ENCODE measurements at regions of chr2 and their contacts with region 1.

Region 1: DNA sequence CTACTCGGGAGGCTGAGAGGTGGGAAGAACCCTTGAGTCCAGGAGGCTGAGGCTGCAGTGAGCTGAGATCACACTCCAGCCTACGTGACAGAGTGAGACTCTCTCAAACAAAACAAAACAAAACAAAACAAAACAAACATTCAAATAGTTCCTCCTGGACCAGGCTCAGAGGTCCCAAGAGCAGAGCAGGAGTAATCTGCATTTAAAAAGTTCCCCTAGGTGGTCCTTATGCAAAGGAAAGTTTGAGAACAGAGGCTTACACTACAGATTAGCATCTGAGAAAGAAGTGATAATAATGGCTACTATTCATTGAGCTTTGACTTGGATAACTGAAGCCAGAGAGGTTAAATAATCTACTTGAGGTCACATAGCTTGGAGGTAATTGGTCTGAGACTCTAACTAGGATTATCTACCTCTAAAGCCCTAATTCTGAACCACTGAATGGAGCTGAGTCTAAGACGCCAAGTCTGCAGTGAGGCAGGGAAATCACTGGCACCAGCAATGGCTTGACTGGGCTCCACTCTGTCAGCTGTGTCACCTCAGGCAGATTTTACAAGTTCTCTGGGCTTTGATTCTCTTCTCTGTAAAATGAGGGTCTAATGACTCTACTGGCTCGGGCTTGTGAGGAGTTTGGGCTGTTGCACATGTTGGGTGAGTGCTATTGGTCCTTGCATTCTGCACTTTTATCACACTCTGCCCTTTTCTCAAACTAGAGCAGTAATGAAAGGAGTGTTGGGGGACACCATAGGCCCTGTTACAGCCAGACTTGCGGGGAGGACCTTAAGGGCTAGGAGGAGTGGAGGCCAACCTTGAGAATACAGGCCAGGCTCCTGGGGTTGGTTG is 29.2 kb upstream of the DLX2 start:
- DNase-seq: no peak
- H3K4me3 Mint-ChIP-seq: no peak overlapping the region
- H3K27ac Mint-ChIP-seq: no peak overlapping the region
- H3K4me1 Mint-ChIP-seq: no peaks in the 10 kb centered on the region
- H3K27me3 Mint-ChIP-seq: peaks cover 32% of the 10 kb centered on the region

Region 2: DNA sequence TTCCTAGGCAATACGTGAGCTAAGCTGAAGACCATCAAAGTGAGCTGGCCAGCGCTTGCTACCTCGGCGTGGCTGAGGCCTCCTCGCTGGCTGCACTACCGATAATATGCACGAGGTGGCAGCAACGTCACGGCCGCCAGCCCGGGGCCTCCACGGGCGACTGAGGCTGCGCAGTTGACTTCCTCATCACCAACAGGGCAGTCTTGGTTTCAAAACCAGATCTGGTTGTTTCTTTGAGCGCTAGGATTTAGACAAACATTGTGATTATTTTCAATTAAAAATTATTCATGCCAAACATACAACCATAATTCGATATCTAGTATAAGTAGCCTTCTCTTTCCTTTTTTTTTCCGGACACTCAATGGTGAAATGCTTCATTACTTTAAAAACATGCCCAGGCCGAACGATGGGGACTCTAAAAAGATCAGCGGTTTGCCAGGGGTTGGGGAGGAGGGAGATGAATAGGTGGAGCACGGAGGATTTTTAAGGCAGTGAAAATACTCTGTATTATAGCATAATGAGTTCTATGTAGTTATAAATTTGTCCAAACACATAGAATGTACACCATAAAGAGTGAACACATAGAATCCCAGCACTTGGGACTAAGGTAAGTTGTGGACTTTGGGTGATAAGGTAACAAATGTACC is 557.7 kb before region 1 on chr2:
- intact Hi-C with region 1: loop called (anchors 1 kb)
- DNase-seq: peak; percentile 73
- H3K4me3 Mint-ChIP-seq: no peak overlapping the region
- H3K27ac Mint-ChIP-seq: no peak overlapping the region
- H3K4me1 Mint-ChIP-seq: no peaks in the 10 kb centered on the region
- H3K27me3 Mint-ChIP-seq: peaks cover 9% of the 10 kb centered on the region

Region 3: GRCh38 chr2:172119089-172119488 is 12.8 kb before region 1 on chr2:
- intact Hi-C with region 1: no loop called
- DNase-seq: no peak
- H3K4me3 Mint-ChIP-seq: no peak overlapping the region
- H3K27ac Mint-ChIP-seq: no peak overlapping the region
- H3K4me1 Mint-ChIP-seq: no peaks in the 10 kb centered on the region
- H3K27me3 Mint-ChIP-seq: peaks cover 27% of the 10 kb centered on the region

Region 4: DNA sequence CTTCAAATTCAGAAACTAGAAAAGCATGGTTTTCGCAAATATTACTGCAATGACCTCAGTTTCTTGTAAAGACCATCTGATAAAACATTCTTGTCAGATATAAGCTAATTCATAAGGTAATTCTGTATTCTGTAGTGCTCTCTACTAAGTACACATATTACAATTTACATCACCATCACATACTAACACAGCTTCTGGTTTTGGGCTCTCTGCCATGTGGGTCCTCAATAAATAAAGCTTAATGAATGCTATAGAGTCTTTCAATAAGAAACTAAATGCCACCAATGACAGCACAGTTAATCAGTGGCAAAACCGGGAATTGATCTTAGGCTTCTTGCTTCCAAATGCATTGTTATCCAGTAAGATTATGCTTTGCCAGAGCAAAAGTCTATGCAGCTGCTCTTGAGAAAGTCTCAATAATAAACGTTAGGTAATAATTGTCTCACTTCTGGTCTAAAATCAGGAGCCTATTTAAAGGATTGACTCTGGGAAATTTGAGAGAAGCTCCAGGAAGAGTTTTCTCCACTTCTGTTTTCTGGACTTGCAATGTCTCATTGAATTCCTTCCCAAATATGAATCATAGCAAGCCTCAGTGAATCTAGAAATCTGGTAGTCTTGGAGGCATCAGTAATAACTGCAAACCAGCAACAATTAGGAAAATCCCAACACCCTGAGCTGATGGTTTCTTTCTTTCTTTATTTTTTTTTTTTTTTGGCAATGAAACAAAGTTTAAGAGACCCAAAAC is 535.8 kb after region 1 on chr2:
- intact Hi-C with region 1: no loop called
- DNase-seq: no peak
- H3K4me3 Mint-ChIP-seq: no peak overlapping the region
- H3K27ac Mint-ChIP-seq: no peak overlapping the region
- H3K4me1 Mint-ChIP-seq: no peaks in the 10 kb centered on the region
- H3K27me3 Mint-ChIP-seq: peaks cover 4% of the 10 kb centered on the region

Region 5: DNA sequence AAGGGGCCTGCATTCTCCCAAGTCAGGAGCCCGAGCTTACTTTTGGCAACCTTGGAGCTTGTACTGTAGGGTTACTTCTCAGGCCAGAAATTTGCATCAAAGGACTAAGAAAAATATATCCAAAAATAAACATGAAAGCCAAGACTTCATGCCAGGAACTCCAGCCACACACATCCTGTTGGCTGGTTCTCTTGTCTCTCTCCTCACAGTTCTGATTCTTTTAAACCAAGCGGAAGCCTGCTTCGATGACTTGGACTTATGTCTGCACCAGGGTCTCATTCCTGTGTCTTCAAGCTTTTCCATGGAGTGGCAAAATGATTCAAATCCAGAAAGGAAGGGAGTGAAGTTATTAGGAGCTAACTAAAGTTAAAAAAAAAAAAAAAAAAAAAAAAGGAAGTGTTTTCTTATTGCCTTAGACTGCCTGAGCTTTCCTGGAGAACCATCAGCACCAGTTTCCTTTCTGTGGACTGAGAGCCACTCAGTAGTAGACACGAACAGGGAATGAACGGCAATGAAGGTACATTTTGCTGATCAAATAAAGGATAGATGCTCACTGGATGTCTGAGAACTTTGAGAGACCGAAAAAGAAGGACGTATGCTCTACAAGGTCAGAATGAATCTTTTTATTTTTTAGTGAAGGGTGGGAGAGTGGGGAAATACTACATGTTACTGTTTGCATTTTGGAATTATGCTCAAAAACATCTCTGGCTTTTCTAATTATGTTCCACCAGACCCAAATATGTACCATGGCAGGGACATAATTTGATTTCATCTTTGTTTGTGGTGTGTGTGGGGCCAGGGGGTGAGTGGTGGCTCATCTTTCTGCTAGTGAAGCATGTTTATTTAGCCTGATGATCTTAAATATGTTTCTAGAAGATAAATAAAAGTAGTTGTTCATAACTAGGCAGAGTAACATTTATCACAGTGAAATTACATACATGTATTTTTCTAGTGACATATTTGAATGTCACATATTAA is 689.7 kb after region 1 on chr2:
- intact Hi-C with region 1: no loop called
- DNase-seq: no peak
- H3K4me3 Mint-ChIP-seq: no peak overlapping the region
- H3K27ac Mint-ChIP-seq: no peak overlapping the region
- H3K4me1 Mint-ChIP-seq: no peaks in the 10 kb centered on the region
- H3K27me3 Mint-ChIP-seq: peaks cover 8% of the 10 kb centered on the region

Measured in activated T-helper 1 cell treated with anti-CD3 and anti-CD28 coated beads, Interleukin-12 subunit alpha, Interleukin-12 subunit beta, Interleukin-2, Interleukin-4 antibody, amounts not matched to agents 30 ng/mL and 10 ng/mL and 1 ng/mL, durations not matched to agents 14 hours and 24 hours and 36 hours (primary cell).